Motor neuron (in vitro differentiated cells): ENCODE measurements at regions of chr12 and their contacts with region 1.

Region 1: DNA sequence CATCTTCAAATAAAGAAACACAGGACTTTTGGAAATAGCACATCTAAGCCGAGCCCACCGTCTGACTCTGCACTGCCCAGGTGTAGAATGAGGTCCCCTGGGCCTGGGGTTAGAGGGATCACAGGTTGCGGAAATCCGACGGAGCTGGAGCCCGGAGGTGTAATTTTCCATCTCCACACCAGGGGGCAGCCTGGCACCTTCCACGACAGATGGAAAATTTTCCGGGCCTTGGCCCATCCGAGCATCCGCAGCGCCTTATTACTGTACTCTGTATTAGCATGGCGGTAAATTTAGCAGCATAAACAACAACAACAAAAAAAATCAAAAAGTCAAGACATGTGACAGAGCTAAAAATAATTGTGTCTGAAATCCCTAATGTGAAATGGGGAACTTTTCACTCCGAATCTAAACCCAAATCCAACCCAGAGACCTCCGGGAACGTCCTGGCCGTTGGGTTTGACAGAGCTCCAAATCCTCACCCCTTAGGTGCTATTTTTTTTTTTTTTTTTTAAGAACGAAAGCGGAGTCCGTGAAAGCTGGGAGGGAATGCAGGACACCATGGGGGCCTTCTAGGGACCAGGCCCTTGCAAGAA is 93.9 kb downstream of the KSR2 start:
- ATAC-seq: peak; percentile 13 to 68 (median 24)
- H3K4me3 ChIP-seq: no peak overlapping the region
- H3K27ac ChIP-seq: no peak overlapping the region
- H3K4me1 ChIP-seq: no peaks in the 10 kb centered on the region

Region 2: GRCh38 chr12:117212563-117213190 is 662.3 kb before region 1 on chr12:
- in situ Hi-C with region 1: loop called in 1 of 9 experiments (anchors 25 kb)
- ATAC-seq: peak; percentile 76 to 93 (median 88)
- H3K4me3 ChIP-seq: no peak overlapping the region
- H3K27ac ChIP-seq: no peak overlapping the region
- H3K4me1 ChIP-seq: no peaks in the 10 kb centered on the region

Region 3: DNA sequence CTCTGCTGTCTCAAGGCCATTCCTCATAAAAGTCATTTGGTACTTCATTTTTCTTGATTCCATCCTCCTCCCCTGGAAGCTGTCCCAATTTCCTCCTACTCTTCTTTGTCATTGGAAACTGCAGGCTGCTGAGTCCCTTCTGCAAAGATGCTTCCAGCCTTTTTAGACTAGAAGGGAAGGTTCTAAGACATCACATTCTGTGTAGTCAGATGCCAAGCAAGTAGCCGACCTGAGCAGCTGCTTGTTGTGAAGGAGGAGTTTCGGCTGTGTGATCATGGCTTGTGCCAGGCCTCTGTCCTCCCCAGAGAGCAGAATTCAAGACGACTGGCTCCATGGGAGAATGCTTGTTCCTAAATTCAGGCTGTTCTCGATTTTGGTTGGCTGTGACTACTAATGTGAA is 150.2 kb after region 1 on chr12:
- in situ Hi-C with region 1: loop called in 3 of 9 experiments (anchors 10 to 25 kb)
- ATAC-seq: no peak
- H3K4me3 ChIP-seq: no peak overlapping the region
- H3K27ac ChIP-seq: no peak overlapping the region
- H3K4me1 ChIP-seq: no peaks in the 10 kb centered on the region

Region 4: DNA sequence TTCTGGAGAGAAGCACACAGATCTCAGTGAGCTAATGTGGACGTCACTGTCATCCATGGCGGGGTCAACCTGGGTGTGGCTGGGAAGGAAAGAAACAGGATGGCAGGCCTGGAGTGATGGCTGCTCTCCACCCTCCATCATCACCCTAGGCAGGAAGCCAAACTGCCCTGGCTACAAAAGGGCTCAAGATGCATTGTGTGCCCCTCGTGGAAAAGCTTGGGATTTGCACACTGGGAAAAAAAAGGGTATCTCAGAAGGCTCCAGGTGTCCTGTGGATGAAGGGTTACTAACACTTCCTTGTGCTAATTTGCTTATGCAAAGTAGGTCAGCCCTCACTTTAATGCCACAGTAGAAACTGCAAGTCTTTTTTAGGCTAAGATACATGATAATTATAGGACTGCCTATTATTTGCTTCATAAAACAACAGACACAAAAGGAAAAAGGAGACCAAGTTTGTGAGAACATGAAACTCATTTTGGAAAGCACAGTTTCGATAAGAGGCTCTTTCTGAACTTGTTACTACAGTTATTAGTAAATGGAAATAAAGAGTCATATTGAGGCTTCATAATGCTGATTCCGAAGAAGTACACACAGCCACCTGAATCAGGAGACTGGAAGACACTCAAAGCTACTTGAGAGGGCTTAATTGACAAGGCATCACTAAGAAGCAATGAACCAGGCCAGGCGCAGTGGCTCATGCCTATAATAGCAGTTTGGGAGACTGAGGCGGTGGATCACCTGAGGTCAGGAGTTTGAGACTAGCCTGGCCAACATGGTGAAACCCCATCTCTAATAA is 160.5 kb after region 1 on chr12:
- in situ Hi-C with region 1: loop called in 2 of 9 experiments (anchors 10 to 25 kb)
- ATAC-seq: peak in 7 of 8 experiments; percentile 34 to 80 (median 67)
- H3K4me3 ChIP-seq: no peak overlapping the region
- H3K27ac ChIP-seq: no peak overlapping the region
- H3K4me1 ChIP-seq: peaks cover 0 to 8% of the 10 kb centered on the region in 2 donors